GM10248 (cell line): ENCODE measurements at regions of chr6 and their contacts with region 1.

Region 1: GRCh38 chr6:148578245-148578732 is 168.5 kb upstream of the UST start:
- DNase-seq: peak; percentile 75
- CTCF ChIP-seq: peak; percentile 99

Region 2: GRCh38 chr6:148524976-148525375 is 53.3 kb before region 1 on chr6:
- CTCF ChIA-PET with region 1: no interaction called
- POLR2A ChIA-PET with region 1: no interaction called
- DNase-seq: no peak
- CTCF ChIP-seq: no peak

Region 3: DNA sequence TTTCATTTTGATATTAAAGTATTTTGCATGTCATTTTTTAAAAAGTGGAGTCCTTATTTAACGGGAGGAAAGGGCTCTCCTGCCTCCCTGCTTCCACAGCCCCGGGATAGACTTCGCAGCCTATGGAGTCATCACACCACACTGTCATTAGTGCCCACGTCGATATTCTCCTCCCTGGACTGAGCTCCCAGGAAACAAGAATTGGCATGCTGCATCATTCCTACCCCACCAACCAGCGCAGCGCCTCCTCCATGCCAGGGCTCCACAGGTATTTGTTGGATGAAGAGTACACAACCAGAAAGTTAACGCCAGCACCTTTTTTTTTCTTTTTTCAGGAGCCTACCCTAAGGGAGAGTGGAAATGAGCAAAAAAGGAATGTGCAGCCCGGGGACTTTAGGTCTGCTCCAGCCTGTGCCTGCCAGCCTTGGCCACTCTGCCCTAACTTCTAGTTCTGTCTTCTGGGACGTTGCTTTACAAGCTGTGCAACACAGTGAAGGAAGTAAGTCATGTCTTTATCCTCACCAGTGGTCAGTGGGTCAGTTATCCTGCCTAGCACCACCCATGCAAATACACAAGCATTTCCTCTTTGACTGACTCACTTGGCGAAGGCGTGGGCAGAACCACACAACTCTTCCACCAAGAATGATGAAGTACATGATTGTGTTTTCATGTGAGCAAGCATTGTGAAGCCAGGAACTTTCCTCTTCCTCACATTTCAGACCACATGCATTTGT is 12.2 kb before region 1 on chr6:
- CTCF ChIA-PET with region 1: interaction called, 22 read pairs
- POLR2A ChIA-PET with region 1: no interaction called
- DNase-seq: peak; percentile 44
- CTCF ChIP-seq: no peak

Region 4: DNA sequence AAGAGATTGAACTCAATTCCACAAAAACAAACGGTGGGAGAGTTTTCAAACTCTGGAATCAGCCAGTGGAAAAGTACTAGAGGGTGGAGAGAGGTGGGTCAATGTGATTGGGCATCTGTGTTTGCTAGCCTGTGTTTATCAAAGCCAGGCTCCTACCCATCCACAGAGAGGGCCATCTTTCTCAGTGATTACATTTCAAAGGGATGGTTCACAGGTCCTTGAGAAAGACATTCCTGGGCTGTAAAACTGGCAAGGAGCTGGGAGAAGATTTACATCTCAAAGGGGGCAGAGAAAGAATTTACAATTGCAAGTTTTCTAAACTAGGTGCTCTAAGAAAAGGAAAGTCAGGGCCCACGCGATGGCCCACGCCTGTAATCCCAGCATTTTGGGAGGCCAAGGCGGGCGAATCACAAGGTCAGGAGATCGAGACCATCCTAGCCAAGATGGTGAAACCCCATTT is 21.7 kb after region 1 on chr6:
- CTCF ChIA-PET with region 1: interaction called, 19 read pairs
- POLR2A ChIA-PET with region 1: no interaction called
- DNase-seq: no peak
- CTCF ChIP-seq: no peak

Region 5: DNA sequence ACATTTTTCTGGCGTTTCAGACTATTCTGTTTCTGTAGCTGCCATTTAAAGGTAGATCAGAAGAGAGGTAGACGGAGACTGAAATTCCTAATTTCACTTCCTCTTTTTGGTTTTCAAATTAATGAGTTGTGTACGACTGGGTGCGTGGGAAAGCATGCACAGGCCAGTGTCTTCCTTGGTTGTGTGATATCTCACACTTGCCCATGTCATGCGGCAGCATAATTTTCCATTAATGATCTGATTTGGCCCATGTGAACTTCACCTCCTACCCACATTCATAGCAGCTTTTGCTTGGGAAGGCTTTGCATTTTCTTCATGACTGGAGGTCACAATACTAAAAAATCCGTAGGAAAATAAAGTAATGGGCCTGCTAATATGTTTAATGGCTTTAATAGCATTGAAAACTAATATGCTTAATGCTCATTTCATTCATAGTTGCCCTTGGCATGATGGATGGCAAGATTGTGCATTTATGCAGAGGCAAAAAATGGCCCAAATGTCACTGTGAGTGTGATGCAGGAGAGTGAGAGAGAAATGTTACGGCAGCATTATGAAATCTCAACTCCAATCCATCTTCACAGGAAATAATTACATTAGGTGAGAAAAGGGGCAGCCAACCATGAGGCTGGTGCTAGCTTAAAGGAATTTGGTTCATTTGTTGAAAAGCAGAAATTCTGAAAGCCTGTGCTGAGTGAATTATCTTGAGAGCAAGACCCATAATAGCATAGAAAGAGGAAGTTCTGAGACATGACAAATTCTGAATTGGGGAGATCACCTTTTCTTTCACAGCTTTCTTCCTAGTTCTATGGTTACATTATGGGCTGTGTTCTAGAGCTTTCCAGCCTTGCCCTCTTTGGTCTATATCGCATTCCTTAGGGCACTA is 99.5 kb after region 1 on chr6:
- CTCF ChIA-PET with region 1: interaction called, 12 read pairs
- POLR2A ChIA-PET with region 1: no interaction called
- DNase-seq: peak; percentile 62
- CTCF ChIP-seq: no peak

Region 6: DNA sequence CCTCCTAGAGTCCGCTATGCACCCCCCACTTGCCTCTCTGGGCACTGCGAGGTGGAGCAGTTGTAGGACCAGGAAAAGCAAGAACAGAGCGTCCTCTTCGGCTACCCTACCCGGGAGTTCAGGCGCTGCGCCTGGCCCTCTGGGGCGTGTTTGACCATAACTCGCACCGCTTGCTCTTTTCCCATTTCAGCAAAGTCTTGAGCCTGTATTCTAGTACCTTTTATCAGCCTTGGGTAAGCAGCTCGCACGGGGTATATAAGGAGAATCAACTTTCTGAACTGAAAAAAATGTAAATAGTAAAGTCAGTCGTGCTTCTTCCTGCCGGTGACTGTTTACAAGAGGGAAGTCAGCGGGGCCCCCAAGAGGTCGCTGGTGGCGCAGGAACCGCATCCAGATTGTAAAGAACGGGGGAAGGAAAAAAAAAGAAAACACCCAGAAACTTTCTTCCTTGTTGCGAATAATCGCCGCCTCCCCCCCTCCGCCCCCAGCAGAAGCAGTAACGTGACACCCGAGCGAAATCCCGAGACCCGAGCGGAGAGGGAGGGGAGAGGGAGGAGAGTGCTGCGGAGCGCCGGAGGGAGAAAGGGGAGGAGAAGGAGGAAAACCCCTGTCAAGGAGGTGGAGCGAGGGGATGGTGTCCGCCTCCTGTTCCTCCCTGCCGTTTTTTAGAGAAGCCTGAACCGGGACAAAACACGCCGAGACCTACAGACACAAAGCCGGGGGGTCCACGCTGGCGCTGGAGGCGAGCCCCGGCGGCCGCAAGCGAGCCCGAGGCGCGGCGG is 168.3 kb after region 1 on chr6 and contains the start of gene UST:
- CTCF ChIA-PET with region 1: interaction called, 13 read pairs
- POLR2A ChIA-PET with region 1: interaction called, 3 read pairs
- DNase-seq: peak; percentile 65
- CTCF ChIP-seq: peak; percentile 62

Region 7: GRCh38 chr6:148934539-148934938 is 356.2 kb after region 1 on chr6:
- CTCF ChIA-PET with region 1: interaction called, 13 read pairs
- POLR2A ChIA-PET with region 1: no interaction called
- DNase-seq: no peak
- CTCF ChIP-seq: no peak

Region 8: GRCh38 chr6:149028767-149029405 is 450.6 kb after region 1 on chr6:
- CTCF ChIA-PET with region 1: interaction called, 10 read pairs
- POLR2A ChIA-PET with region 1: no interaction called
- DNase-seq: peak; percentile 59
- CTCF ChIP-seq: peak; percentile 54